ENCODE measurements at regions of chr17 and their contacts with region 1.

Region 1: DNA sequence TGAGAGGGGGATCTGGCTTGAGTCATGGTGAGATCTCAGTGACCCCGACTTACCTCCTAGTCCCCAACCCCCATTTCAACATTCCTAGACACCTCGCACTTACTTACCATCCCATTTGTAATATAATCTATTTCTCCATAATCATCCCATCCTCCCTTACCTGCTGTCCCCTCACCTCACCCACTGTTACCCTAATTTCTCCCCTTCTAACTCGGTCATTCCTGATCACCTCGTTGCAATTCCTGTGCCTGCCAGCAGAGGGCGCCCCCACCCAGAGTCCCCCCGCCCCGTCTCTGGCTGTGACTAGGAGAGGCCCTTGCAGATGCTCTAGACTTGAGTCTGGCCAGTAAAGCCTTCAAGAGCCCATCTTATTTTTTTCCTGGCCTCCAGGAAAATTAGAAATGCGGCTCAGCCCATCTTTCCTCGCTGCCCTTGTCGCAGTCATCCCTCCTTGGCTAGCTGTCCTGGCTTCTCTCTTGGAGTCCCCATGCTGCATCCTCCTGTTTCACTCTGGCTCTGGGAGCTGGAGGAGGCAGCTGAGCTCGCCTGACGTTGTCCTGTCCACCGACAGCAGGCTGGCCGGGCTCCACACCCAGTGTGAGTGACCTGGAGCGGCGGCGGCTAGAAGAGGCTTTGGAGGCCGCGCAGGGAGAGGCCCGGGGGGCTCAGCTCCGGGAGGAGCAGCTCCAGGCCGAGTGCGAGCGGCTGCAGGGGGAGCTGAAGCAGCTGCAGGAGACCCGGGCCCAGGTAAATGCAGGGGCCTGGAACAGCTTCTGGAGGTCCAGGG is 5.0 kb downstream of the TBKBP1 start:
- DNase-seq: peak; percentile 89
- ATAC-seq: peak; percentile 32
- H3K4me3 Mint-ChIP-seq: no peak overlapping the region
- H3K27ac Mint-ChIP-seq: peak overlapping the region; percentile 31
- H3K4me1 Mint-ChIP-seq: peaks cover 49% of the 10 kb centered on the region
- H3K27me3 Mint-ChIP-seq: peaks cover 4% of the 10 kb centered on the region

Region 2: DNA sequence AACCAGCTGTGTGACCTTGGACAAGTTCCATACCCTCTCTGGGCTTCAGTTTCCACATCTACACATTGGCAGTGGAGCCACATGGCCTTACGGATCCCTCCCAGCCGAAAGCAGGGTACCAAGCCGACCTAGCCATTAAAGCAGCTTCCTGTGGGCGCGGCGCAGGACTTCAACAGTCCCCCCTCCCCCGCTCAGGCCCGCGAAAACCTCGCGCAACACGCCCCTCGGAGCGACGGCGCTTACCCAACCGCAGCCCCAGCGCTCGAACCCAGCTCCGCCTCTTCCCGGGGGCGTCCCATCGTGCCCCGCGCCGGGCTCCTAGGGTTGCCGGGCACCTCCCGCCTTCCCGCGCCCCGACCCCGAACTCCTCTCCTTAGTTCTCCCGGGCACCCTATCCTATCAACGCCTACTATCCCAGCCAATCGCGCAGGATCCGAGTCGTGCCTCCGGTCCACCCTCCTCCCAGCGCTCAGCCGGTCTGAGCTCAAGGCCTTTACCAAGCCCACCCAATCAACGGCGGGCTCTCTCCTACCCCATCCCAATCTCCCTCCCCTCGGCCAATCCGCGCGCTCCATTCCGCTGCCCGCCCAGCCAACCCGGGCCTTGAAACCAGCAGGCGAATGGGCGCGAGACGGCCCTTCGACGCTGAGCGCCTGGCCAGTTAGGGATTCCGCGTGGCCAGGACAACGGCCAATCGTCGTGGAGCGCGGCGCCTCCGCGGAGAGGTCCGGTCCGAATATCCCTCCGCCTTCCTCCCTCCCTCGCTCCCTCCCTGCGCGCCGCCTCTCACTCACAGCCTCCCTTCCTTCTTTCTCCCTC is 49.6 kb before region 1 on chr17 and contains the start of gene KPNB1:
- CTCF ChIA-PET with region 1: interaction called, 11 read pairs
- DNase-seq: peak; percentile 100
- ATAC-seq: peak; percentile 87
- H3K4me3 Mint-ChIP-seq: peak within 1 kb of the TSS; percentile 99
- H3K27ac Mint-ChIP-seq: peak within 1 kb of the TSS; percentile 100
- H3K4me1 Mint-ChIP-seq: peaks cover 38% of the 10 kb centered on the region
- H3K27me3 Mint-ChIP-seq: no peaks in the 10 kb centered on the region
- total RNA-seq, gene KPNB1: 413 to 525 TPM

Region 3: GRCh38 chr17:47720754-47721533 is 22.0 kb after region 1 on chr17:
- CTCF ChIA-PET with region 1: interaction called, 157 read pairs
- DNase-seq: peak; percentile 97
- ATAC-seq: peak; percentile 80
- H3K4me3 Mint-ChIP-seq: peak overlapping the region; percentile 69
- H3K27ac Mint-ChIP-seq: peak overlapping the region; percentile 90
- H3K4me1 Mint-ChIP-seq: peaks cover 81% of the 10 kb centered on the region
- H3K27me3 Mint-ChIP-seq: peaks cover 2% of the 10 kb centered on the region

Region 4: GRCh38 chr17:47742319-47743181 is 43.6 kb after region 1 on chr17:
- CTCF ChIA-PET with region 1: interaction called, 263 read pairs
- DNase-seq: no peak
- ATAC-seq: no peak
- H3K4me3 Mint-ChIP-seq: no peak overlapping the region
- H3K27ac Mint-ChIP-seq: peak overlapping the region; percentile 59
- H3K4me1 Mint-ChIP-seq: peaks cover 56% of the 10 kb centered on the region
- H3K27me3 Mint-ChIP-seq: no peaks in the 10 kb centered on the region

Region 5: DNA sequence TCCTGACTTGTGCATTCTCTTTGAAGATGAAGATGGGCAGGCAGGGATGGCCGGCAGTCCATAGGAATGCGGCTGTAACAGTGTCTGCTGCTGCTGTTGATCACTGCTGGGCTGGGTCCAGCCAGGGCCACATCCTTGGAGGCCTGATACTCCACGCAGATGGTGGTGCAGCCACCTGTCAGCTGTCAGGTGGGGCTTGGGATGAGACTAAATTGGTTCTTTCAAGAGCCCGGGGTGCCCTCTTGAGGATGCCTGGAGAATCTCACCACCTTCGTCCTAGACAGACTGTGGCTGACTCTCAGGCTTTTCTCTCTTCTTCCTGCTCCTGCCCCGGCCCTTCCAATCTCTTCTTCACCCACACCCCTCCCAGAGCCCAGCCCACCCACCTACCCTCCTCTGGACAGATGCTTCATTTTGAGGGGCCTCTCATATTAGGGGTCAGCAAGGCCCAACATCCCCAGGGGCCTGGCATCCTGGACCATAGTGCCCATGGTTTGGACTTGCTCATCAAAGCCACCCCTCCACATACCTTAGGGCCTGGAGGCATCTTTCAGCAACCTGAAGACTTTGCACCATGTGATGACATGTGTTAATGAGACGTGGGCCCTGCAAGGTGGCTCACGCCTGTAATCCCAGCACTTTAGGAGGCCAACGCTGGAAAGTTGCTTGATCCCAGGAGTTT is 103.5 kb after region 1 on chr17:
- CTCF ChIA-PET with region 1: interaction called, 10 read pairs
- DNase-seq: peak; percentile 72
- ATAC-seq: peak; percentile 92
- H3K4me3 Mint-ChIP-seq: no peak overlapping the region
- H3K27ac Mint-ChIP-seq: no peak overlapping the region
- H3K4me1 Mint-ChIP-seq: no peaks in the 10 kb centered on the region
- H3K27me3 Mint-ChIP-seq: peaks cover 6% of the 10 kb centered on the region

Region 6: DNA sequence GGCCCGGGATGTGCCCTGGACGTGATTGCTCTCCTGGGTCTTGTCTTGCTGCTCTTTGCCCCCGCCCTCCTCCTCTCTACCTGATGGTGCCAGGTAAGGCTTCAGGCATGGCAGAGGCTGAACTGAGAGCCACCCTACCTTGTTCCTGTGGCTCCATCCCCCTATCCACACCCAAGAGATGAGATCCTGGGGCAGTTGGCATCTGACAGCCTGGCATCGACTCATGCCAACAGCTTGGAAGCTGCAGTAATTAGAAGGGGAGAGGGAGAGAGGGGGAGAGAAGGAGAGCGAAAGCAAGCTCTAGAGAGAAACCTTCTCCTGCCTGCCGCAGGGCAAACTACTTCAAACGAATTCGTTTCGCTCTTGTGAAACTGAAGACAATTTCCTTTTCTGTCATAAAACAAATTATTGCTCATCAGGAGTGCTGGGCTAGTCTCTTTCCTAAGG is 165.9 kb after region 1 on chr17:
- CTCF ChIA-PET with region 1: no interaction called
- DNase-seq: no peak
- ATAC-seq: no peak
- H3K4me3 Mint-ChIP-seq: no peak overlapping the region
- H3K27ac Mint-ChIP-seq: no peak overlapping the region
- H3K4me1 Mint-ChIP-seq: peaks cover 8% of the 10 kb centered on the region
- H3K27me3 Mint-ChIP-seq: peaks cover 15% of the 10 kb centered on the region

Measured in activated CD8-positive, alpha-beta memory T cell treated with anti-CD3 and anti-CD28 coated beads, Interleukin-2, amount 10 ng/mL, durations not matched to agents 7 days and 5 days (primary cell).